ENCODE measurements at regions of chrX and their contacts with region 1.

Region 1: DNA sequence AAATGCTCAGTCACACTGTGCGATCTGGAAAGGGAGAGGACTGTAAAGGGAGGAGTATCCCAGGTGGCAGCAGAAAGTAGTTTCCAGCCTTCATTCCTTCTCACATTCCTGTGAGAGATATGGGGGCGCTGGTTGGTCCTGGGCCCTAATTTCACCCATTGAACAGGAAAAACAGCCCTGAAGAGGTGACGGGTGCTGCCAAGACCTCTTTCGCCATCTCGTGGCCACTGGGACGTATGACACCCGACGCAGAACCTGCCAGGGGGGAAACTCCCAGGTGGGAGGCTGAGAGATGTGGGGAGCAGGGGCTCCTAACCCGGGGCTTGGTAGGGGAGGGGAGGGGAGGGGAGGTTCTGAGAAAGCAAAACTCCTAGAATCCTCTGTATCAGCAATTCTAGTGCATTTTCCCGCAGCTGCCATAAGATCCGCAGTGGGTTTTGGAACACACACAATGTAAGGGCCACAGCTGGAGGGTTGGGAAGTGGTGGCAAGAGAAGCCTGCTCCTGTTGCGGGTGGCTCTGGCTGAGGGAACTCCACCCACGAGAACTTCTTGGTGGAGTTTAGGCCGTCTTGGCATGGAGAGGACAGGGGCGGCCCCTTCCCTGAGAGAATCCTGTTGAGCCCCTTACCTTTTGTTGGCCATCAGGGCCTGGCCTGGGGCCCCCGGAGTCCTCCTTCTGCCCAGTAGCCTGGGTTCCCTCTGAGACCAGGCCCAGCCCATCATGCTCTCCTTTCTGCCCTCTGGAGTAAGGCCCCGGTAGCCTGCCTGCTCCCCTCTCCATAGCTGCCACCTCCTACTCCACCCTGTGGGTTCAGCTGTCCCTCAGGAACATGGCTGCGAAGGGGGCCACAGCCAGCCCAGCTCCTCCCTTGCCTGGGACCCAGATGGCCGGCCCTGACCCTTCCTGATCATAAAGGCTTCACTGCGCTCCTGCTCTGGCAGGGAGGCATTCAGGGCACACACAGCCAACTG is 134.1 kb downstream of the OR13H1 start:
- DNase-seq: peak in 7 of 10 donors; percentile 14 to 58 (median 23)
- H3K4me3 ChIP-seq: no peak overlapping the region
- H3K27ac ChIP-seq: no peak overlapping the region
- H3K27me3 ChIP-seq: peaks cover 0 to 74% (median 19%) of the 10 kb centered on the region in 45 donors
- CTCF ChIP-seq: peak in 54 of 56 donors; percentile 29 to 72 (median 61)

Region 2: GRCh38 chrX:131841496-131842410 is 163.8 kb after region 1 on chrX:
- intact Hi-C with region 1: loop called in 1 of 2 experiments (anchors 5 kb)
- DNase-seq: peak in 1 of 10 donors; percentile 48
- H3K4me3 ChIP-seq: peak overlapping the region in 1 of 59 donors; percentile 6
- H3K27ac ChIP-seq: no peak overlapping the region
- H3K27me3 ChIP-seq: peaks cover 0 to 71% (median 26%) of the 10 kb centered on the region in 45 donors
- CTCF ChIP-seq: peak in 55 of 56 donors; percentile 51 to 92 (median 83)

Measured in dorsolateral prefrontal cortex (tissue), 120 donors.